ENCODE measurements at regions of chr5 and their contacts with region 1.

Region 1: GRCh38 chr5:150656191-150657132 is 4.6 kb upstream of the MYOZ3 start:
- DNase-seq: peak; percentile 70 to 88
- H3K4me3 ChIP-seq: peak overlapping the region; percentile 40 to 45
- H3K27ac ChIP-seq: peak overlapping the region; percentile 78 to 80
- H3K4me1 ChIP-seq: peaks cover 0 to 12% of the 10 kb centered on the region in 2 donors
- H3K27me3 ChIP-seq: no peaks in the 10 kb centered on the region
- CTCF ChIP-seq: peak; percentile 62 to 88 (median 83)
- POLR2A ChIP-seq: no peak

Region 2: GRCh38 chr5:150574818-150575547 is 81.5 kb before region 1 on chr5:
- intact Hi-C with region 1: loop called (anchors 5 kb)
- DNase-seq: peak in 1 of 2 donors; percentile 12
- H3K4me3 ChIP-seq: no peak overlapping the region
- H3K27ac ChIP-seq: no peak overlapping the region
- H3K4me1 ChIP-seq: no peaks in the 10 kb centered on the region
- H3K27me3 ChIP-seq: no peaks in the 10 kb centered on the region
- CTCF ChIP-seq: no peak
- POLR2A ChIP-seq: no peak

Region 3: DNA sequence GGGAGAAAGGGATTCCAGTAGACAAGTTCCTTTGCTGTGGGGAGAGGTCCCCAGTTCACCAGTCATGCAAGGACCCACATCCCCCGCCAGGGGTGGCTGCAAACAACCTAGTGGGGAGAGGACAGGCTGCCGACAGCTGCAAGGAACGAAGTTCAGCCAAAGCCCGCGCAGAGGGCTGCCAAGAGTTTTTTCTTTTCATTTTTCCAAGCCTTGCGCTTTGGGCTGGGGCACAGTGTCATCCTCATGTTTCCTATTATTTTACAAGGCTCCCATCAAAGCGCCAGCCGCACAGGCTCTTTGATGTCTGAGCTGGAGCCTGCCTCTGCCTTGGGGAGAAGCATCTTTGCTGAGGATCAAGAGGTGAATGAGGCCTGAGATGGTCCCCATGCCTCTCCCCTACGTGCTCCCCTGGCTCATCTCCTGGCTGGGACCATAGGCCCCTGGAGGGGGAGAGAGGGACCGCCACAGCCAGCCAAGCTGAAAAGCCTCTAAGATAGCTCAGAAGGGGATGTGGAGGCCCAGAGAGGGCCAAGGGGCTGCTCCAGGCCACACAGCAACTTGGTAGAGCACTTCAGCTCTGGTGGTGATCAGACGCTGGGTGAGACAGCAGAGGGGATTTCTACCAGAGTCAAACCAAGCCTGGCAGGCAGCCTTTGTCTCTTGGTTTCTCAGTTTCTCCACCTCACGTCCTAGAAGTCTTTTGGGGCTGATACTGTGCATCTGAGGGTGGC is 66.4 kb before region 1 on chr5:
- intact Hi-C with region 1: loop called (anchors 5 kb)
- DNase-seq: peak; percentile 85 to 87
- H3K4me3 ChIP-seq: no peak overlapping the region
- H3K27ac ChIP-seq: peak overlapping the region; percentile 68 to 70
- H3K4me1 ChIP-seq: peaks cover 0 to 12% of the 10 kb centered on the region in 2 donors
- H3K27me3 ChIP-seq: no peaks in the 10 kb centered on the region
- CTCF ChIP-seq: peak; percentile 86 to 94 (median 90)
- POLR2A ChIP-seq: no peak

Measured in uterus (tissue), 4 donors.